Gastrocnemius medialis (tissue), 4 donors: ENCODE measurements at regions of chr6 and their contacts with region 1.

Region 1: DNA sequence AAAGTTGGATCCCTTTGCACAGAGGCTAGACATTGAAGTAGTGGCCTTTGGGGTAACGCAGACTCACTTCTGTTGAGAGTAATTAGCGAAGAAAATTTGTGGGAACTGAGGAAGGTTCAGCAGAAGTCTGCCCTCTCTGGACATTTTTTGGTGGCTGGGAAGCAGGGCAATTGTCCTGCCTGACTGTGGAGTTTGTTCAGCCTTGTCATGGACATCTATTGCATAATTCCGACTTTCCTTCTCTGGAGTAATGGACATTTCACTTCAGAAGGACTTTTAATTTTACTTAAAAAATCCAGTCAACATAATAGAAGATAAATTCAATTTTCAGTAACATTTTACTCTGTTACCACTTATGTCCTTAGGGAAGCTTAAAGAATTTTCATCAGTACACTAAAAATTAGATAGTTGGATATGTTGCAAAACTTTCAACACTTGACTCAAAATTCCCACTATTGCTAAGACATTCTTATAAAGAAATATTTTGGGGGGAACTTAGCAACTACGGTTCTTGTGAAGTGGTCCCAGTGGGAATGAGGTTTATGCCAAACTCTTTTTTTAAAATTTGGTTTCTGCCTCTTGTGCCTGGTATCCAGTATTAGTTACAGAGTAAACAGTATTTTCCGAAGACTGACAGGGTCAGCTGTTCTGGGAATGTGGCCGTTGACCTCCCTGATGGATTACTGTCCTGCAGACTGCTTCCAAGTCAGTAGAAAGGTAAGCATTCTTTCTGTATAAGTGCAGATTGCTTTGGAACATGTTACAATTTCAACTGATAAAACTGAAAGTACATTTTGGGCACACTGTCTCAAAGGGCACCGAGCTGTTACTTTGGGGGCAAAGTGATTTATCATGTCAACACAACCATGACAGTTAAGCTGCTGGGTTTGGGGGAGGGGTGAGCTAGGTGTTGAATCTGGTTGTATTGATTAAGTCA is 100.6 kb upstream of the MLIP start:
- DNase-seq: peak; percentile 70 to 79
- ATAC-seq: peak; percentile 91 to 93
- H3K4me3 ChIP-seq: peak overlapping the region; percentile 39 to 52 (median 50)
- H3K27ac ChIP-seq: peak overlapping the region; percentile 85 to 89 (median 88)
- H3K4me1 ChIP-seq: peaks cover 33 to 43% of the 10 kb centered on the region in 2 donors
- H3K27me3 ChIP-seq: no peaks in the 10 kb centered on the region
- CTCF ChIP-seq: peak in 2 of 5 experiments; percentile 19 to 23
- POLR2A ChIP-seq: no peak

Region 2: DNA sequence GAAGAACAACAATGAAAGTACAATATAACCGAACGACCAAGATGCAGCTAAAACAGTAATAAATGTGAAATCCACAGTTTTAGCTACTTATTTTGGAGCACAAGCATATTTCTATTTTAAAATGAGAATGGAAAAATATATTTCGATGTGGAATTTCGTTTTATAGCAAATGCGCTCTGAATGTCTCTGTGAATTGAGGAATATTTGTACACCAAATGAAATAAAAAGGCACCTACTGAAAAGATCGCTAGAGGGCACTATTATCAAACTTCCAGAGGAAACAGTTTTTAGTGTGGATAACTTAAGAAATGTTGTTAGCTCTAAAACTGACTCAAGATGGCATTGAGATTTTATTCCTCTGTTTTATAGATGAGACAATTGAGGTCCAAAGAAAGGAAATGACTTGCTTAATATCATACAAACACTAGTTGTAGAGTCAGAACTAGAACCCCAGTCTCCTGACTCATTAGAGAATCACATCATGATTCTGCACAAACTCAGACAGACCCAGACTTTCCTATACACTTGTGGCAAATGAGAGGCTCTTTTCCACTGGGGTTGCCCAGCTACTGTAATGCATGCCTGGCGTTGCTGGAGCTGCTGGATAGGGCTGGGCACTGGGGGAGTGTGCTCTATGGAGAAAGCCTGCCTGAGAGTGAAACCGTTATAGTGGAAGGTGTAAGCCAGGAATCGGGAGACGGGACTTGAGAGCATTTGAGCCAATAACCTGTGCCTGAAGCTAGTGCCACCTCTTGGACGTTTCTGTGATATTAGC is 517.6 kb before region 1 on chr6:
- in situ Hi-C with region 1: no loop called
- intact Hi-C with region 1: no loop called
- DNase-seq: peak in 1 of 2 donors; percentile 24
- ATAC-seq: peak; percentile 72 to 91
- H3K4me3 ChIP-seq: peak overlapping the region; percentile 29 to 54 (median 36)
- H3K27ac ChIP-seq: peak overlapping the region; percentile 36 to 76 (median 39)
- H3K4me1 ChIP-seq: peaks cover 5 to 9% of the 10 kb centered on the region in 2 donors
- H3K27me3 ChIP-seq: no peaks in the 10 kb centered on the region
- CTCF ChIP-seq: peak; percentile 26 to 78 (median 71)
- POLR2A ChIP-seq: no peak

Region 3: DNA sequence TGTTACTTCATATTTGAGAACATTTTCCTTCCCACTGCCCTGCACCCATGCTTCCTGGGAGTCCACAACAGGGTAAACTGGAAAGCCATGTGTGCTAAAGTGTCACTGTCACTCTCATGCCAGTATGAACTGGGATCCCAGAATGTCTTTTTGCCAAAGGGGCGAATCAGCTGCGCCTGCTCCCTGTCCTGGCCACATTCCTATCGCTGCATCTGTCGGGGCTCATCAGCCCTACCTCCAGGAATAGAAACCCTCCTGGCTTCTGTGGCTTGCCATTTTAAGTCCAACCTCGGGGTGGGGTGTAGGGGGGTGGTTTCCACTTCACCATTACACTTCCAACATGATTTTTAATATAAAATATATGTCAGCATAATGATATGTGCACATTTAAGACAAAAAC is 346.0 kb before region 1 on chr6:
- in situ Hi-C with region 1: no loop called
- intact Hi-C with region 1: loop called (anchors 10 kb)
- DNase-seq: peak; percentile 80 to 92
- ATAC-seq: peak; percentile 82 to 83
- H3K4me3 ChIP-seq: peak overlapping the region; percentile 46 to 69 (median 53)
- H3K27ac ChIP-seq: peak overlapping the region; percentile 89 to 96 (median 92)
- H3K4me1 ChIP-seq: peaks cover 45 to 52% of the 10 kb centered on the region in 2 donors
- H3K27me3 ChIP-seq: no peaks in the 10 kb centered on the region
- CTCF ChIP-seq: peak in 3 of 5 experiments; percentile 10 to 43 (median 16)
- POLR2A ChIP-seq: peak in 1 of 2 donors; percentile 44

Region 4: DNA sequence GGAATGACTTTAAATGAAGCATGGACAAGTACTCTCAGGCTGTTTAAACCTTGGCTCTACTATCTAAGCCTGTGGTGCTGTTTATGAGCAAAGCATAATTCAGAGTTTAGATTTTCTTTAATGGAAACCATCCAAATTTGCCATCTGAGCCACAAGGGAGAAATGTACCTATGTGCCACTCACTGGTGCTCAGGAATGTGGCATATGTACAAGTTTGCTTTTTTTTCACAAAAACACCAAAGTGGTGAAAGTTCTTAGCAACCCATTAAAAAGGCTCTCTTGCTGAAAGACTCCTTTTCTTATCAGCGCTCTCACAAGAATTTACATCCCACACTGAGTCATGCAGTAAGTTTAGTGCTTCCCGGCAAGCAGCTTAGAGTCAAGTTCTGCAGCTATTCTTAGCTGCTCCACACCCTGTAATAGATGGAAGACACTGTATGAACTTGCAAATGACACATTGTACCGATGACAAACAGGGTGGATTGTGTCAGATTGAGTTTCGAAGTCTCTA is 43.3 kb after region 1 on chr6:
- in situ Hi-C with region 1: no loop called
- intact Hi-C with region 1: loop called (anchors 1 kb)
- DNase-seq: peak; percentile 76 to 80
- ATAC-seq: peak; percentile 95 to 96
- H3K4me3 ChIP-seq: peak overlapping the region; percentile 30 to 46 (median 36)
- H3K27ac ChIP-seq: peak overlapping the region; percentile 85 to 94 (median 92)
- H3K4me1 ChIP-seq: peaks cover 79 to 96% of the 10 kb centered on the region in 2 donors
- H3K27me3 ChIP-seq: no peaks in the 10 kb centered on the region
- CTCF ChIP-seq: no peak
- POLR2A ChIP-seq: peak; percentile 7 to 73

Region 5: GRCh38 chr6:54085541-54085940 is 74.9 kb after region 1 on chr6:
- in situ Hi-C with region 1: no loop called
- intact Hi-C with region 1: loop called (anchors 5 kb)
- DNase-seq: peak; percentile 38 to 75
- ATAC-seq: peak; percentile 57 to 61
- H3K4me3 ChIP-seq: peak overlapping the region in 3 of 4 donors; percentile 8 to 57 (median 52)
- H3K27ac ChIP-seq: peak overlapping the region; percentile 90 to 97 (median 94)
- H3K4me1 ChIP-seq: peaks cover 58 to 67% of the 10 kb centered on the region in 2 donors
- H3K27me3 ChIP-seq: no peaks in the 10 kb centered on the region
- CTCF ChIP-seq: no peak
- POLR2A ChIP-seq: no peak

Region 6: DNA sequence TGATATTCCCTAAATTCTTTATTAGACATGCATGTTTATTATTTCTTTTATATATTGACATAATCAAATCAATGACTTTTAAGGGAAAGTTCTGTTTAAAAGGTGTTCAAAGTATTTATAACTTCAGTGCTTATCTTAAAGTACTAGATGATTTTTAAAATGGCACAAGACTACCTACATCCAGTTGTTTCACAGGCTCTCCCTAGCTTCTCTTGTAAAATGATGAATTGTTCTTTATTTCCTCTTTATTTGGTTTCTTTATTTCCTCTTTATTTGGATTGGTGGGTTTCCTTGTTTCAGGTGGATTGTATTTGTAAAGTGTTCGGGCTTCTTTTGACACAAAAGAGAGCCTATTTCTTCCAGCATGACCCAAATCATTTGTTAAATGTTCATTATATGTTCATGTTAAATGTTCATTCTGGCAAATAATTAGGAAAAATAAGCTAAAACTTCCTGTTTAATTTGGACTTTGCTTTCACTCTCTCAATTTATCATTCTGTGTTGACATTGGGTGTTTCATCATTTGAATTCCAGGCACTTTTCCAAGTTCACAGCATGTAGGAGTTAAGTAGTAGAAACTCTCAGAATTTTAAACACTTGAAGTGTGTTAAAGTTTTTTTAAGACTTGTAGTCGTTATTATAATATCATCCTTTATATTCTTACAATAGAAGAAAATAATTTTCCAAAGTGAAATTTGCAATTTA is 125.2 kb after region 1 on chr6:
- in situ Hi-C with region 1: no loop called
- intact Hi-C with region 1: loop called (anchors 5 kb)
- DNase-seq: no peak
- ATAC-seq: no peak
- H3K4me3 ChIP-seq: no peak overlapping the region
- H3K27ac ChIP-seq: peak overlapping the region; percentile 45 to 69 (median 68)
- H3K4me1 ChIP-seq: peaks cover 38 to 47% of the 10 kb centered on the region in 2 donors
- H3K27me3 ChIP-seq: no peaks in the 10 kb centered on the region
- CTCF ChIP-seq: no peak
- POLR2A ChIP-seq: no peak

Region 7: GRCh38 chr6:54255886-54256285 is 245.3 kb after region 1 on chr6:
- in situ Hi-C with region 1: no loop called
- intact Hi-C with region 1: loop called (anchors 5 kb)
- DNase-seq: no peak
- ATAC-seq: peak; percentile 93 to 94
- H3K4me3 ChIP-seq: no peak overlapping the region
- H3K27ac ChIP-seq: peak overlapping the region; percentile 60 to 82 (median 66)
- H3K4me1 ChIP-seq: peaks cover 48 to 71% of the 10 kb centered on the region in 2 donors
- H3K27me3 ChIP-seq: no peaks in the 10 kb centered on the region
- CTCF ChIP-seq: no peak
- POLR2A ChIP-seq: no peak